Astrocyte of the cerebellum (primary cell): ENCODE measurements at regions of chr6 and their contacts with region 1.

Region 1: GRCh38 chr6:5398530-5398929 is 137.2 kb downstream of the FARS2 start:
- DNase-seq: no peak
- H3K4me3 ChIP-seq: no peak overlapping the region
- CTCF ChIP-seq: peak; percentile 49

Region 2: GRCh38 chr6:5143634-5144311 is 254.8 kb before region 1 on chr6:
- in situ Hi-C with region 1: loop called (anchors 25 kb)
- DNase-seq: peak; percentile 76
- H3K4me3 ChIP-seq: no peak overlapping the region
- CTCF ChIP-seq: peak; percentile 82